Endothelial cell of umbilical vein (primary cell): ENCODE measurements at regions of chr12 and their contacts with region 1.

Region 1: DNA sequence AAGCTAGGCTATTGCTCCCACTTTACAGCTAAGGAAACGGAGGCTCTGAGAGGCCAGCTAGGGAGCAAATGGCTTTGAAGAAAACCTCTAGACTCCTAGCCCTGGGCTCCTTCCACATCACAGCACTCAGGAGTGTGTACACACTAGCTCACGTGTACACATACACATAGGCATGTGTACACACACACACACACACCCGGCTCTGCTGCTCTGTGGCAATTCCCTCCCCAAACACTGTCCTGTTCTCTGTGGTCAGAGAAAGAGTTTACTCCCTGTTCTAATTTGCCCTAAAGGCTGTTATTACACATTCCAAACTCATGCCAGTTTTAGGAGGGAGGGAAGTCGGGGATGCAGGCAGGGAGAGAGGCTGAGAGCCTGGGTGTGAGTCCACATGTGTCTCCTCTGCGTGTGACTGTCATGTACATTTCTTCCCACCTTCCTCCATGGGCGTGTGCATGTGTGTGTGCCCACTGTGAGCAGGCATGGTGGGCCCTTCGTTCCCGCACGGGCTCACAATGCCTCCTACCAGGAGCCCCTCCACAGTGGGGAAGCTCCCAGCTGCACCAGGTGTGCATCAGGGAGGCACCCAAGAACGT is 14.2 kb downstream of the TRPV4 start:
- DNase-seq: no peak
- H3K4me3 ChIP-seq: no peak overlapping the region
- H3K27ac ChIP-seq: no peak overlapping the region
- H3K4me1 ChIP-seq: no peaks in the 10 kb centered on the region
- H3K27me3 ChIP-seq: no peaks in the 10 kb centered on the region
- CTCF ChIP-seq: no peak
- POLR2A ChIP-seq: no peak

Region 2: GRCh38 chr12:109393437-109394345 is 425.3 kb before region 1 on chr12:
- CTCF ChIA-PET with region 1: no interaction called
- POLR2A ChIA-PET with region 1: no interaction called
- dilution Hi-C with region 1: no loop called
- intact Hi-C with region 1: no loop called
- DNase-seq: peak; percentile 63
- H3K4me3 ChIP-seq: no peak overlapping the region
- H3K27ac ChIP-seq: no peak overlapping the region
- H3K4me1 ChIP-seq: no peaks in the 10 kb centered on the region
- H3K27me3 ChIP-seq: no peaks in the 10 kb centered on the region
- CTCF ChIP-seq: peak; percentile 86 to 91
- POLR2A ChIP-seq: no peak

Region 3: GRCh38 chr12:109833307-109834189 is 14.5 kb after region 1 on chr12 and contains the start of gene TRPV4:
- CTCF ChIA-PET with region 1: interaction called, 3 read pairs
- POLR2A ChIA-PET with region 1: no interaction called
- dilution Hi-C with region 1: no loop called
- intact Hi-C with region 1: loop called (anchors 1 kb)
- DNase-seq: peak; percentile 64
- H3K4me3 ChIP-seq: peak within 1 kb of the TSS; percentile 50 to 63 (median 58)
- H3K27ac ChIP-seq: peak within 1 kb of the TSS; percentile 27
- H3K4me1 ChIP-seq: peaks cover 24% of the 10 kb centered on the region
- H3K27me3 ChIP-seq: no peaks in the 10 kb centered on the region
- CTCF ChIP-seq: no peak
- POLR2A ChIP-seq: peak; percentile 70
- total RNA-seq, gene TRPV4: 8.8 and 12.3 TPM in 2 replicates

Region 4: GRCh38 chr12:109937371-109937770 is 118.4 kb after region 1 on chr12:
- CTCF ChIA-PET with region 1: no interaction called
- POLR2A ChIA-PET with region 1: no interaction called
- dilution Hi-C with region 1: no loop called
- intact Hi-C with region 1: no loop called
- DNase-seq: peak; percentile 87
- H3K4me3 ChIP-seq: no peak overlapping the region
- H3K27ac ChIP-seq: peak overlapping the region; percentile 66
- H3K4me1 ChIP-seq: peaks cover 21% of the 10 kb centered on the region
- H3K27me3 ChIP-seq: no peaks in the 10 kb centered on the region
- CTCF ChIP-seq: no peak
- POLR2A ChIP-seq: no peak